ENCODE measurements at regions of chr5 and their contacts with region 1.

Region 1: DNA sequence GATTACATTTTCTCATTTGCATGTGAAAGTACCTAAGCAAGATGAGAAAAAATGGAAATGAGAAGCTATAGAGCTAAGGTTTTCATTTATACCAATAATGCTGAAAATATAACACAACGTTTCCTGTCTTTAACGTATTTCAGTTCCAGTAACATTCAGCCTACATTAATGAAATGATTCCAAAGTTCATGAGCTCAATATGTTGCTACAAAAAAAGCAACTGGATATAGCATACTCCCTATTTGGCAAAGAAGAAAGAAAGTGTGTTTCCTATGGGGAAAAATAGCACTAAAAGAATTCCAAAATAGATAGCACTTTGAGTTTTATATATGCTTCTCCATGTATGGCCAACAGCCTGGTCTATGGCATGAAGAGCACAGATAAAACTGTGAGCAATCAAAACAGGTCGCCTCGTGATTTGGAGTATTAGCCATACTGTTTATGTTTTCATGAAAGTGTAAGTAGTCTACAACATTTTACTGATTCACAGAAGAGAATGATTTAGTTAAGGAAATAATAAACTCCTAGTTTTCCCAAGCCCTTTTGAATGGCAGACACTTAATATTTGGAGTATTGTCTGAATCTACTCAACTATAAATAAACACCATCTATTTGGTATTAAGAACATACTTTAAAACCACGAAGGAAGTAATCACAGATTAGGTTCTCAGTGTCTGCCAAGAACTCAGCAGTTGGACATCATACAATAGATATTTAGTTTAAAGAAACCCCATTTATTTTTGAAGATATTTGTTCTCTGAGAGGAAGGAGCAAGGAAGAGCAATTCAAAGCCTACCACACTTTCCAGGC is 258.7 kb upstream of the RASA1 start:
- DNase-seq: no peak
- ATAC-seq: peak in 2 of 8 donors; percentile 8 to 19
- H3K4me3 ChIP-seq: no peak overlapping the region
- H3K27ac ChIP-seq: no peak overlapping the region
- H3K4me1 ChIP-seq: peaks cover 0 to 6% (median 0%) of the 10 kb centered on the region in 9 donors
- H3K27me3 ChIP-seq: peaks cover 0 to 3% (median 0%) of the 10 kb centered on the region in 7 donors
- CTCF ChIP-seq: no peak

Region 2: GRCh38 chr5:86709157-86709881 is 299.6 kb before region 1 on chr5:
- intact Hi-C with region 1: no loop called
- DNase-seq: no peak
- ATAC-seq: no peak
- H3K4me3 ChIP-seq: no peak overlapping the region
- H3K27ac ChIP-seq: no peak overlapping the region
- H3K4me1 ChIP-seq: no peaks in the 10 kb centered on the region
- H3K27me3 ChIP-seq: no peaks in the 10 kb centered on the region
- CTCF ChIP-seq: no peak

Region 3: DNA sequence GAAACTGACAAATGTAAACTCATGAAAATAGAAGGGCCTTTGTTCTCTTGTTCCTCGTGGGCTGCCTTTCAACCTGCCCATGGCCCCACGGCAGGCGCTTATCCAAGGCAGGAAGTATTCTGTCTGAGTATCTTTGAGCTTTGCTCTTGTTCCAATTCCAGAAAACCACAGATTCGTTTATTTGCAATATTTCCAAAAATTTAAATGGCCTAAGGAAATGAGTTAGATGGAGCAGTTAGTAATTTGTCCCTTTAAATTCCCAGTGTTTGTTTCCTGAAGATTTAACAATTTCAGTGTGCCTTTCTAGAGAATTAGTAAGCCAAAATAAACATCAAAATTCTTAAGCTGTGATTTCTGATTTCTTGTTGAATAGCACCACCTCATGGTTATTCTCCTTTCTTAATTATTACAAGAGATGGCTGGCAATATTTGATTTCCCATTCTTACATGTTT is 40.6 kb before region 1 on chr5:
- intact Hi-C with region 1: loop called in 1 of 10 experiments (anchors 5 kb)
- DNase-seq: peak; percentile 13 to 26
- ATAC-seq: peak in 7 of 8 donors; percentile 28 to 83 (median 57)
- H3K4me3 ChIP-seq: no peak overlapping the region
- H3K27ac ChIP-seq: peak overlapping the region in 5 of 10 donors; percentile 17 to 56 (median 38)
- H3K4me1 ChIP-seq: peaks cover 0 to 9% (median 0%) of the 10 kb centered on the region in 9 donors
- H3K27me3 ChIP-seq: peaks cover 0 to 3% (median 0%) of the 10 kb centered on the region in 7 donors
- CTCF ChIP-seq: peak in 7 of 9 donors; percentile 18 to 64 (median 52)

Region 4: GRCh38 chr5:87190687-87191086 is 181.7 kb after region 1 on chr5:
- intact Hi-C with region 1: no loop called
- DNase-seq: no peak
- ATAC-seq: no peak
- H3K4me3 ChIP-seq: no peak overlapping the region
- H3K27ac ChIP-seq: no peak overlapping the region
- H3K4me1 ChIP-seq: peaks cover 0 to 10% (median 0%) of the 10 kb centered on the region in 9 donors
- H3K27me3 ChIP-seq: no peaks in the 10 kb centered on the region
- CTCF ChIP-seq: no peak

Measured in heart right ventricle (tissue), 16 donors.